ENCODE measurements at regions of chr1 and their contacts with region 1.

Region 1: GRCh38 chr1:46940307-46940706 is 969 bp downstream of the CYP4A11 start:
- DNase-seq: no peak
- H3K4me3 ChIP-seq: no peak overlapping the region
- H3K27ac ChIP-seq: no peak overlapping the region
- H3K4me1 ChIP-seq: no peaks in the 10 kb centered on the region
- H3K27me3 ChIP-seq: peaks cover 7% of the 10 kb centered on the region
- CTCF ChIP-seq: no peak

Region 2: GRCh38 chr1:46991083-46991923 is 51.0 kb after region 1 on chr1:
- CTCF ChIA-PET with region 1: no interaction called
- dilution Hi-C with region 1: no loop called
- in situ Hi-C with region 1: no loop called
- intact Hi-C with region 1: loop called (anchors 2 kb)
- DNase-seq: no peak
- H3K4me3 ChIP-seq: no peak overlapping the region
- H3K27ac ChIP-seq: no peak overlapping the region
- H3K4me1 ChIP-seq: no peaks in the 10 kb centered on the region
- H3K27me3 ChIP-seq: peaks cover 5% of the 10 kb centered on the region
- CTCF ChIP-seq: peak in 1 of 2 donors; percentile 54

Measured in mammary epithelial cell (primary cell).